ENCODE measurements at regions of chr1 and their contacts with region 1.

Region 1: DNA sequence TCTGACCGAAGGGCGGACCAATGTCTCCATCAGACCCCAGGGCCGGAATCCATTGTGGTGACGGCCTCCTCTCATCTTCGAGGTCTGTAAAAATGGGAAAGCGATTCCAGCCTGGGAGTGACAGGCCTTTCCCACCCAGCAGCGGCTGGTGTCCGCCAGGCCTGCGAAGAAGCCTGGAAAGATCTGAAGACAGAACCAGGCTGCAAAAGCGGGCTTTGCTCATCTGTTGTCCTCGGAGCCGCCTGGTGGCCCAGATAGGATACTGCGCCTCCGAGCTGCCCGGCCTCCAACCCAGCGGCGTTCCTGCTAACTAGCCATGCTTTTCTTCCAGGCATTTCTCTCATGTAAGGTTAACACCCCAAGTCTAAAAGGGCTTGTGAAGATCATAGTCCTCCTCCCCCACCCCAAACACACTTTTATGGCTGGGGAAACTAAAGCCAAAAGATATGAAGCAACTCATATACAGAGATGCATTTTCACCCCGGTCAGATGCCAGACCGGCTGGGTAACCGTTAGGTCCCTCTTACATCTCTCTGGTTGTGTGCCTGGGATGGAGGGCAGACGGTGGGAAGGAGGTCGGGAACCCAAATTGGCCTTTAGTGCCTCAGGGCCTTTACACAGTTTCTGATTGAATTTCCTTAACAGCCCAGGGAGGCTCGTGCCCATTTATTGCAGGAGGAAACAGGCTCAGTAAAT is 1.9 kb upstream of the DHRS3 start:
- DNase-seq: peak; percentile 77
- ATAC-seq: peak; percentile 76
- H3K4me3 ChIP-seq: peak overlapping the region in 3 of 5 experiments; percentile 57 to 71 (median 60)
- H3K4me3 Mint-ChIP-seq: peak overlapping the region; percentile 86
- H3K27ac ChIP-seq: no peak overlapping the region
- H3K27ac Mint-ChIP-seq: no peak overlapping the region
- H3K4me1 ChIP-seq: peaks cover 29 to 46% of the 10 kb centered on the region in 2 donors
- H3K4me1 Mint-ChIP-seq: peaks cover 42% of the 10 kb centered on the region
- H3K27me3 ChIP-seq: peaks cover 0 to 50% (median 11%) of the 10 kb centered on the region in 4 experiments
- H3K27me3 Mint-ChIP-seq: peaks cover 54% of the 10 kb centered on the region
- CTCF ChIP-seq: peak; percentile 97

Region 2: GRCh38 chr1:12275369-12275768 is 344.6 kb before region 1 on chr1:
- CTCF ChIA-PET with region 1: interaction called, 15 read pairs
- POLR2A ChIA-PET with region 1: no interaction called
- intact Hi-C with region 1: loop called (anchors 1 kb)
- DNase-seq: peak; percentile 29
- ATAC-seq: no peak
- H3K4me3 ChIP-seq: no peak overlapping the region
- H3K4me3 Mint-ChIP-seq: no peak overlapping the region
- H3K27ac ChIP-seq: no peak overlapping the region
- H3K27ac Mint-ChIP-seq: peak overlapping the region; percentile 63
- H3K4me1 ChIP-seq: no peaks in the 10 kb centered on the region
- H3K4me1 Mint-ChIP-seq: no peaks in the 10 kb centered on the region
- H3K27me3 ChIP-seq: no peaks in the 10 kb centered on the region
- H3K27me3 Mint-ChIP-seq: no peaks in the 10 kb centered on the region
- CTCF ChIP-seq: peak; percentile 65

Region 3: GRCh38 chr1:12407050-12407961 is 212.6 kb before region 1 on chr1:
- CTCF ChIA-PET with region 1: interaction called, 12 read pairs
- POLR2A ChIA-PET with region 1: no interaction called
- intact Hi-C with region 1: no loop called
- DNase-seq: no peak
- ATAC-seq: no peak
- H3K4me3 ChIP-seq: no peak overlapping the region
- H3K4me3 Mint-ChIP-seq: no peak overlapping the region
- H3K27ac ChIP-seq: no peak overlapping the region
- H3K27ac Mint-ChIP-seq: no peak overlapping the region
- H3K4me1 ChIP-seq: no peaks in the 10 kb centered on the region
- H3K4me1 Mint-ChIP-seq: peaks cover 2% of the 10 kb centered on the region
- H3K27me3 ChIP-seq: no peaks in the 10 kb centered on the region
- H3K27me3 Mint-ChIP-seq: no peaks in the 10 kb centered on the region
- CTCF ChIP-seq: no peak

Region 4: GRCh38 chr1:12438349-12438924 is 181.5 kb before region 1 on chr1:
- CTCF ChIA-PET with region 1: no interaction called
- POLR2A ChIA-PET with region 1: no interaction called
- intact Hi-C with region 1: no loop called
- DNase-seq: no peak
- ATAC-seq: peak; percentile 15
- H3K4me3 ChIP-seq: no peak overlapping the region
- H3K4me3 Mint-ChIP-seq: no peak overlapping the region
- H3K27ac ChIP-seq: peak overlapping the region in 1 of 2 donors; percentile 11
- H3K27ac Mint-ChIP-seq: peak overlapping the region; percentile 71
- H3K4me1 ChIP-seq: peaks cover 33 to 44% of the 10 kb centered on the region in 2 donors
- H3K4me1 Mint-ChIP-seq: peaks cover 45% of the 10 kb centered on the region
- H3K27me3 ChIP-seq: no peaks in the 10 kb centered on the region
- H3K27me3 Mint-ChIP-seq: no peaks in the 10 kb centered on the region
- CTCF ChIP-seq: no peak

Region 5: GRCh38 chr1:12709091-12709491 is 89.2 kb after region 1 on chr1:
- CTCF ChIA-PET with region 1: no interaction called
- POLR2A ChIA-PET with region 1: no interaction called
- intact Hi-C with region 1: no loop called
- DNase-seq: no peak
- ATAC-seq: no peak
- H3K4me3 ChIP-seq: no peak overlapping the region
- H3K4me3 Mint-ChIP-seq: no peak overlapping the region
- H3K27ac ChIP-seq: no peak overlapping the region
- H3K27ac Mint-ChIP-seq: no peak overlapping the region
- H3K4me1 ChIP-seq: no peaks in the 10 kb centered on the region
- H3K4me1 Mint-ChIP-seq: no peaks in the 10 kb centered on the region
- H3K27me3 ChIP-seq: peaks cover 0 to 4% (median 0%) of the 10 kb centered on the region in 4 experiments
- H3K27me3 Mint-ChIP-seq: peaks cover 45% of the 10 kb centered on the region
- CTCF ChIP-seq: no peak

Measured in B cell (primary cell).